ENCODE measurements at regions of chr10 and their contacts with region 1.

Region 1: GRCh38 chr10:119207367-119207668 is at the start of gene GRK5:
- DNase-seq: peak; percentile 97
- ATAC-seq: peak; percentile 88
- H3K4me3 Mint-ChIP-seq: peak within 1 kb of the TSS; percentile 92
- H3K27ac Mint-ChIP-seq: peak within 1 kb of the TSS; percentile 93
- H3K4me1 Mint-ChIP-seq: peaks cover 38% of the 10 kb centered on the region
- H3K27me3 Mint-ChIP-seq: no peaks in the 10 kb centered on the region
- total RNA-seq, gene GRK5: 21.2 to 24.8 TPM

Region 2: DNA sequence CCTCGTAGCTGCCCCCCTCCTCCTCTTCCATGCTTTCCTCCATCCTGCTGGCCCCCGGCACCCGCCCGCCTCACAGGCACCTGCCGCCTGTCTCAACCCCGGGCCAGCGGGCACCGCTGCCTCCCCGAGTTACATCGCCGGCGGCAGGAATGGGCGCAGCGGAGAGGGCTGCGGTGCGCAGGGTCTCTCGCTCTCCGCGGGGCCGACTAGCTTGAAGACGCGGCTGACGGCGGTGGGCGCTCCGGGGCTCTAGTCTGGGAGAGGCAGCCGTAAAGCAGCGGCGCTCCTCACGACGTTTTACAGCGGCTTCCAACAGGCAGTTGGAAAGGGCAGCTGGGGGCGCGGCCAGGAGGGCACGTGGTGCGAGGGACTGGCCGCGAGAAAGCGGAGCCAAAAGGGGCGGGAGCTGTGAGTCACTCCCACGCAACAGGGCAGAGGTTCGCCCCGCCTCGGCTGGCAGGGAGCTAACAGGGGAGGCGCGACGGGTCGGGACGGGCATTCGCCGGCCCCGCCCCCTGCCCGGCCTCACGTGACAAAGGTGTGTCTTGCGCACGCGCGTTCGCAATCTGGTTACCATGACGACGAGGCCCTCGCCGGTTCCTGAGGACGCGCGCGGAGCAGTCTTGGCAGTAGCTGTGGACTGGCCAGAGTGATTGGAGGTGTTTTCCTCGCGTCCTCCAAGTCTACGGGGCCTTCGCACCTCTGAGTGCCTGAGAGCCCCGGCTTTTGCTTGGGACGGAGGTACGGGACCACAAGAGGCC is 452.4 kb before region 1 on chr10 and contains the start of gene CACUL1:
- CTCF ChIA-PET with region 1: no interaction called
- POLR2A ChIA-PET with region 1: no interaction called
- intact Hi-C with region 1: loop called in 1 of 2 experiments (anchors 1 kb)
- DNase-seq: peak; percentile 100
- ATAC-seq: peak; percentile 98
- H3K4me3 Mint-ChIP-seq: peak within 1 kb of the TSS; percentile 91
- H3K27ac Mint-ChIP-seq: peak within 1 kb of the TSS; percentile 83
- H3K4me1 Mint-ChIP-seq: peaks cover 33% of the 10 kb centered on the region
- H3K27me3 Mint-ChIP-seq: no peaks in the 10 kb centered on the region
- total RNA-seq, gene CACUL1: 20.1 to 24.4 TPM

Region 3: DNA sequence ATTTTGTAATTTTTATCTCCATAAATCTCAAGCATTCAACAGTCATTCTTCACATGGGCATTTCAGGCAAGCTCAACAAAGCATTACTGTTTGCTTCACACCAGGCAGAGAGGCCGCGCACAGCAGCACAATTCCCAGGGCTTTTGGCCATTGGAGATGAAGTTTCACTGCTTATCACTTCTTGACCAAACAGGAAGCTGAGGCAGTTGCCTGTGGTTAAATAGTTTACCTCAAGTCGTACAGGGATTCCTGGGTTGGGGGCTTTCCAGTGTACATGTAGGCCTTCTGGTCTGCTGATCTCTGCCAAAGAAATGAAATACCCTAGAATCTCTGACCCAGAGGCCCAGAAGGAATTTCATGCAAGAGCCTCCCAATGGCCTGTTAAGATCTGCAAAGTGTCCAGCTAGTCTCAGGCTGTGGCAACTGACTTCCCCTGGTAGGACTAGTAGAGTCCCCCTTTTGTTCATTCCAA is 17.5 kb before region 1 on chr10:
- CTCF ChIA-PET with region 1: interaction called, 10 read pairs
- POLR2A ChIA-PET with region 1: interaction called, 3 read pairs
- intact Hi-C with region 1: no loop called
- DNase-seq: no peak
- ATAC-seq: no peak
- H3K4me3 Mint-ChIP-seq: no peak overlapping the region
- H3K27ac Mint-ChIP-seq: no peak overlapping the region
- H3K4me1 Mint-ChIP-seq: peaks cover 21% of the 10 kb centered on the region
- H3K27me3 Mint-ChIP-seq: no peaks in the 10 kb centered on the region

Region 4: DNA sequence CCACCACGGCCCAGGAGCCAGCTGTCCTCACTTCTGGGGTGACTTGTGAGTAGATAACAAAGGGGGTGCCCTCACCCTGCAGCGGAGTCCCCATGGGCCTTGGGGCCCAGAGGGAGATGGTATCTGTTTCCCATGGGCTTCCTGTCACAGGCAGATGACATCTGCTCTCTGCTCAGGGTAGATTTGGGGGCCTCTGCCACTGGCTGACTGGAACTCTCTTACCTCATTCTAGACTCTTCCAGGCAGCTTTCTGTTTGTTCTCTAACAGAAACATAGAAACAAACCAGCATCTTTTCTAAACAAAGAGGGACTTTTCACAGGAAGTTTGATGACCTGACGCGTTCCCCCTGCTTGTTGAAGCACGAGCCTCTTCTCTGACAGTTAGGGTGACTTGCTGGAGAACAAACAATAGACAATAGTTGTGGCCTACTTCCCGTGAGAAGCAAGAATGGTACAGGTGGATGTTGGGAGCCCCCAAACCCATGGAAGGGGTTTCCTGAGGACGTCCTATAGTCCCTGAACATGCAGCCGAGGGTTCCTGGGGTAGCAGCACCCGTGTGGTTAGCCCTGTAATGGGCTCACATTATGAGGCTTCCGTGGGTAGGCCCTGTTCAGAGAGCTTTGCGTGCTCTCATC is 61.7 kb after region 1 on chr10:
- CTCF ChIA-PET with region 1: interaction called, 11 read pairs
- POLR2A ChIA-PET with region 1: no interaction called
- intact Hi-C with region 1: loop called (anchors 1 to 2 kb)
- DNase-seq: peak; percentile 72
- ATAC-seq: peak; percentile 86
- H3K4me3 Mint-ChIP-seq: peak overlapping the region; percentile 5
- H3K27ac Mint-ChIP-seq: peak overlapping the region; percentile 96
- H3K4me1 Mint-ChIP-seq: peaks cover 49% of the 10 kb centered on the region
- H3K27me3 Mint-ChIP-seq: no peaks in the 10 kb centered on the region

Region 5: GRCh38 chr10:119421887-119422681 is 214.8 kb after region 1 on chr10:
- CTCF ChIA-PET with region 1: interaction called, 18 read pairs
- POLR2A ChIA-PET with region 1: no interaction called
- intact Hi-C with region 1: loop called (anchors 1 kb)
- DNase-seq: no peak
- ATAC-seq: no peak
- H3K4me3 Mint-ChIP-seq: no peak overlapping the region
- H3K27ac Mint-ChIP-seq: no peak overlapping the region
- H3K4me1 Mint-ChIP-seq: no peaks in the 10 kb centered on the region
- H3K27me3 Mint-ChIP-seq: no peaks in the 10 kb centered on the region

Region 6: DNA sequence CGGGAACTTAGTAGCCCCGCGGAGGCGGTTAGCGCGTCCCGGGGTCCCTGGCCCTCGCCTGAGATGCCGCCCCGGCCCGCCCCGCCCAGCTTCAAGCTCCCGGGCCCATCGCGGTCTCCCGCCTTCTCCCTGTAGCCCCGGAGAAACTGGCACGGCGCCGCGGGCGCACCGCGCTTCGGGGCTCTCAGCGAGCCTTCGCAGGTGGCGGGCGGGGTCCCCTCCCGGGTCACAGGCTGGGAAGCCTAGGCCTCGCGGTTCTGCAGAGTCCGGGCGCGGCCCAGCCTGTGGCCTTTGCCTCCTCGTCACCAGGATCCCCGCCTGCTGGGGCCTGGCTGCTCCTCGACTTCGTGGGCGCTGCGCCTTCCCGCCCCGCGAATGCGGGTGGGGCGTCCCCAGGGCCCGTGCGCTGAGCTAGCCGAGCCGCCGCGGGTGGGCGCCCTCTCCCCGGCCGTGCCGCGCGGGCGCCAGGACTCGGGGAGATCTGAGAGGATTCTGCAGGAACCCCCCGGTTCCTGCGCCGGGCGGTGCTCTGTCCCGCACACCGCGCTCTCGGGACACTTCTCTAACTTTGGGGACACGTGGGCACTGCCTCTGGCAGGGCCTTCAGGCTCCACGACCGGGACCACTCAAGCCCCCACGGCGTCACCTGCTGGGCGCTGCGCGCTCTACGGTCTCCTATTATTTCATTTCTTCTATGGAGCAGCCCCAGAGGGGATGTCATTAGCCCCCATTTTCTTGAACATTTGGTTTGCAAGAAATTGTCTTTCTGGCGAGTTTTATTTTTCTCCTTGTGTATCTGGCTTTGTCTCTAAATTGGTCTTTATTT is 335.9 kb after region 1 on chr10:
- CTCF ChIA-PET with region 1: interaction called, 5 read pairs
- POLR2A ChIA-PET with region 1: no interaction called
- intact Hi-C with region 1: loop called (anchors 1 kb)
- DNase-seq: peak; percentile 80
- ATAC-seq: peak; percentile 34
- H3K4me3 Mint-ChIP-seq: peak overlapping the region; percentile 77
- H3K27ac Mint-ChIP-seq: peak overlapping the region; percentile 89
- H3K4me1 Mint-ChIP-seq: peaks cover 31% of the 10 kb centered on the region
- H3K27me3 Mint-ChIP-seq: no peaks in the 10 kb centered on the region

Region 7: GRCh38 chr10:120253131-120253530 is 1045.8 kb after region 1 on chr10:
- CTCF ChIA-PET with region 1: no interaction called
- POLR2A ChIA-PET with region 1: no interaction called
- intact Hi-C with region 1: no loop called
- DNase-seq: no peak
- ATAC-seq: no peak
- H3K4me3 Mint-ChIP-seq: no peak overlapping the region
- H3K27ac Mint-ChIP-seq: no peak overlapping the region
- H3K4me1 Mint-ChIP-seq: no peaks in the 10 kb centered on the region
- H3K27me3 Mint-ChIP-seq: peaks cover 10% of the 10 kb centered on the region

Measured in activated CD4-positive, alpha-beta T cell treated with anti-CD3 and anti-CD28 coated beads for 36 hours (primary cell).